MCF 10A (cell line): ENCODE measurements at regions of chr11 and their contacts with region 1.

Region 1: DNA sequence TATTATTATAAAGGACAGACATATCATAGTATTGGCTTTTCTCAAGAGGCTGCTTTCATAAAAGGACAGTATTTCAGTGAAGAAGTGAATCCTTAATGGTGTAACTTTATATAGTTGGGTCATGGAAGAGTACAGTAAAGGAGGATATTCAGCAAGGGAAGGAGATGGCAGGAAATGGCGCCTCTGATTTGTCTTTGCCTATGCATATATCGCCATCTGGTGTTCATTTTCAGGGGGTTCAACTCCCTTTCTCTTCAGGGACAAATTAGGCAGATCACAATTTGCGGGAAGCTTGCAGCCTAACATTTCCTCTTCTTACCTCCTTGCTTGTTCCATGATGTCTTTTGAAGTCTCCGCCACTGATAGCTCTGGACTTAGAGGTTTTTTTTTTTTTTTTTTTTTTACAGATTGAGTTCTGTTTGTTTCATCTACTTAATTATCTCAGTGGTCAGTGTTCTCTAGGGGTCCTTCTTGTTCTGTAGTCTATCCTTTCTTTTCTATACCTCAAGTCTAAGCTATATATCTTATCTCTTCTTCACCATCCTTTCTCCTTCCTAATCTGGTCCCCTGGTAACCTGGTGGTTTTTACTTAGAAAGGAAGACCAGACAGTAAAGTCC is 21.8 kb upstream of the RRM1 start:
- DNase-seq: peak; percentile 81
- H3K4me3 Mint-ChIP-seq: no peak overlapping the region
- H3K27ac Mint-ChIP-seq: no peak overlapping the region
- H3K4me1 Mint-ChIP-seq: peaks cover 10% of the 10 kb centered on the region
- H3K27me3 Mint-ChIP-seq: no peaks in the 10 kb centered on the region
- CTCF ChIP-seq: peak; percentile 73

Region 2: GRCh38 chr11:3824714-3825472 is 247.9 kb before region 1 on chr11:
- CTCF ChIA-PET with region 1: interaction called, 11 read pairs
- POLR2A ChIA-PET with region 1: no interaction called
- intact Hi-C with region 1: no loop called
- DNase-seq: peak; percentile 43
- H3K4me3 Mint-ChIP-seq: no peak overlapping the region
- H3K27ac Mint-ChIP-seq: no peak overlapping the region
- H3K4me1 Mint-ChIP-seq: peaks cover 15% of the 10 kb centered on the region
- H3K27me3 Mint-ChIP-seq: no peaks in the 10 kb centered on the region
- CTCF ChIP-seq: peak; percentile 21

Region 3: GRCh38 chr11:3849297-3849874 is 223.4 kb before region 1 on chr11:
- CTCF ChIA-PET with region 1: interaction called, 1,105 read pairs
- POLR2A ChIA-PET with region 1: interaction called, 57 read pairs
- intact Hi-C with region 1: loop called (anchors 1 kb)
- DNase-seq: peak; percentile 66
- H3K4me3 Mint-ChIP-seq: no peak overlapping the region
- H3K27ac Mint-ChIP-seq: no peak overlapping the region
- H3K4me1 Mint-ChIP-seq: peaks cover 5% of the 10 kb centered on the region
- H3K27me3 Mint-ChIP-seq: peaks cover 10% of the 10 kb centered on the region
- CTCF ChIP-seq: peak; percentile 52

Region 4: GRCh38 chr11:3896644-3897043 is 176.1 kb before region 1 on chr11:
- CTCF ChIA-PET with region 1: interaction called, 21 read pairs
- POLR2A ChIA-PET with region 1: no interaction called
- intact Hi-C with region 1: no loop called
- DNase-seq: no peak
- H3K4me3 Mint-ChIP-seq: no peak overlapping the region
- H3K27ac Mint-ChIP-seq: no peak overlapping the region
- H3K4me1 Mint-ChIP-seq: no peaks in the 10 kb centered on the region
- H3K27me3 Mint-ChIP-seq: no peaks in the 10 kb centered on the region
- CTCF ChIP-seq: no peak

Region 5: GRCh38 chr11:3977078-3977477 is 95.7 kb before region 1 on chr11:
- CTCF ChIA-PET with region 1: interaction called, 13 read pairs
- POLR2A ChIA-PET with region 1: no interaction called
- intact Hi-C with region 1: no loop called
- DNase-seq: no peak
- H3K4me3 Mint-ChIP-seq: no peak overlapping the region
- H3K27ac Mint-ChIP-seq: no peak overlapping the region
- H3K4me1 Mint-ChIP-seq: peaks cover 10% of the 10 kb centered on the region
- H3K27me3 Mint-ChIP-seq: no peaks in the 10 kb centered on the region
- CTCF ChIP-seq: no peak

Region 6: GRCh38 chr11:4044976-4045646 is 27.7 kb before region 1 on chr11:
- CTCF ChIA-PET with region 1: interaction called, 19 read pairs
- POLR2A ChIA-PET with region 1: interaction called, 5 read pairs
- intact Hi-C with region 1: no loop called
- DNase-seq: peak; percentile 57
- H3K4me3 Mint-ChIP-seq: no peak overlapping the region
- H3K27ac Mint-ChIP-seq: peak overlapping the region; percentile 64
- H3K4me1 Mint-ChIP-seq: peaks cover 24% of the 10 kb centered on the region
- H3K27me3 Mint-ChIP-seq: no peaks in the 10 kb centered on the region
- CTCF ChIP-seq: no peak

Region 7: GRCh38 chr11:4103269-4103668 is 30.5 kb after region 1 on chr11:
- CTCF ChIA-PET with region 1: no interaction called
- POLR2A ChIA-PET with region 1: no interaction called
- intact Hi-C with region 1: no loop called
- DNase-seq: no peak
- H3K4me3 Mint-ChIP-seq: no peak overlapping the region
- H3K27ac Mint-ChIP-seq: no peak overlapping the region
- H3K4me1 Mint-ChIP-seq: peaks cover 24% of the 10 kb centered on the region
- H3K27me3 Mint-ChIP-seq: no peaks in the 10 kb centered on the region
- CTCF ChIP-seq: no peak